CD8-positive, alpha-beta T cell (primary cell): ENCODE measurements at regions of chr17 and their contacts with region 1.

Region 1: DNA sequence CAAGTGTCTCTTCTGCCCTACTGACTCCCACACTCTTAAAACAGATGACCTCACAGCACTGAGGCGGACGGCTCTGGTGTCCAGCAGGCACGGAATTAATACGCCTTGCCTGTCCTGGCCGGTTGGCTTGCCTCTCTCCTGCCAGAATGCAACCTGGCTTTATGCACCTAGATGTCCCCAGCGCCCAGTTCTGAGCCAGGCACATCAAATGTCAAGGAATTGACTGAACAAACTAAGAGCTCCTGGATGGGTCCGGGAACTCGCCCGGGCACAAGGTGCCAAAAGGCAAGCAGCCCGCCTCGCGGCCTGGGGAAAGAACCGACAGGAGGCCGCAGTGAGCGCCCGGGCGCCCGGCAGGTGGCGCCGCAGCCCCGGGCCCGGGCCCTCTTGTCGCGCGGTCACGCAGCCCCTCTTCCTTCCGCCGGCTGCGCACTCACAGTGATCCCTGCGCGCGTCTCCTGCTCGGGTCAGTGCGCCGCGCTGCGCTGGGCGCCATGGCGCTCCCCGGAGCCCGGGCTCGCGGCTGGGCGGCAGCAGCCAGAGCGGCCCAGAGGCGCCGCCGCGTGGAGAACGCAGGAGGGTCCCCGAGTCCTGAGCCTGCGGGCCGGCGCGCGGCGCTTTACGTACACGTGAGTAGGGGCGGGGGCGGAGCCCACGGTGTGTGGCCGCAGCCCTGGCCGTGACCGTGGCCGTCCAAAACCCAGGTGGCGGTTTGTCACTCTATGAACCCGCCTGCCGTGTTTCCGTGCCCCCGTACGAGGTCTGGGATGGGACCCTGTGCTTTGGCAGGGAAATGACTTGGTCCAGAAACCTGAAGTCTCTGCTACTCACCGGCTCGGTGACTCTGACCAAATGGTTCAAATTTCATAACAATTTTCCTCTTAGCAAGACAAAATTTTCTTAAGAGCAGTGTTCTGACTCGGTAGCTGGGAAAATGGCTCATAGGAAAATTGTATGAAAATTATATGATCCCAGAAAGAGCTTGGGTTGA is at the start of gene RSAD1:
- DNase-seq: peak; percentile 68 to 94 (median 83)
- ATAC-seq: peak; percentile 90
- H3K4me3 ChIP-seq: peak within 1 kb of the TSS; percentile 71 to 88
- H3K4me3 Mint-ChIP-seq: peak within 1 kb of the TSS; percentile 90
- H3K27ac ChIP-seq: peak within 1 kb of the TSS; percentile 56 to 85
- H3K27ac Mint-ChIP-seq: peak within 1 kb of the TSS; percentile 90
- H3K4me1 ChIP-seq: peaks cover 20% of the 10 kb centered on the region
- H3K4me1 Mint-ChIP-seq: peaks cover 22% of the 10 kb centered on the region
- H3K27me3 ChIP-seq: no peaks in the 10 kb centered on the region
- H3K27me3 Mint-ChIP-seq: peaks cover 3% of the 10 kb centered on the region
- CTCF ChIP-seq: peak; percentile 80
- total RNA-seq, gene RSAD1: 46.4 to 46.9 TPM

Region 2: GRCh38 chr17:50037321-50038071 is 441.2 kb before region 1 on chr17:
- CTCF ChIA-PET with region 1: no interaction called
- POLR2A ChIA-PET with region 1: no interaction called
- intact Hi-C with region 1: no loop called
- DNase-seq: no peak
- ATAC-seq: no peak
- H3K4me3 ChIP-seq: no peak overlapping the region
- H3K4me3 Mint-ChIP-seq: no peak overlapping the region
- H3K27ac ChIP-seq: no peak overlapping the region
- H3K27ac Mint-ChIP-seq: no peak overlapping the region
- H3K4me1 ChIP-seq: no peaks in the 10 kb centered on the region
- H3K4me1 Mint-ChIP-seq: no peaks in the 10 kb centered on the region
- H3K27me3 ChIP-seq: no peaks in the 10 kb centered on the region
- H3K27me3 Mint-ChIP-seq: peaks cover 9% of the 10 kb centered on the region
- CTCF ChIP-seq: no peak

Region 3: DNA sequence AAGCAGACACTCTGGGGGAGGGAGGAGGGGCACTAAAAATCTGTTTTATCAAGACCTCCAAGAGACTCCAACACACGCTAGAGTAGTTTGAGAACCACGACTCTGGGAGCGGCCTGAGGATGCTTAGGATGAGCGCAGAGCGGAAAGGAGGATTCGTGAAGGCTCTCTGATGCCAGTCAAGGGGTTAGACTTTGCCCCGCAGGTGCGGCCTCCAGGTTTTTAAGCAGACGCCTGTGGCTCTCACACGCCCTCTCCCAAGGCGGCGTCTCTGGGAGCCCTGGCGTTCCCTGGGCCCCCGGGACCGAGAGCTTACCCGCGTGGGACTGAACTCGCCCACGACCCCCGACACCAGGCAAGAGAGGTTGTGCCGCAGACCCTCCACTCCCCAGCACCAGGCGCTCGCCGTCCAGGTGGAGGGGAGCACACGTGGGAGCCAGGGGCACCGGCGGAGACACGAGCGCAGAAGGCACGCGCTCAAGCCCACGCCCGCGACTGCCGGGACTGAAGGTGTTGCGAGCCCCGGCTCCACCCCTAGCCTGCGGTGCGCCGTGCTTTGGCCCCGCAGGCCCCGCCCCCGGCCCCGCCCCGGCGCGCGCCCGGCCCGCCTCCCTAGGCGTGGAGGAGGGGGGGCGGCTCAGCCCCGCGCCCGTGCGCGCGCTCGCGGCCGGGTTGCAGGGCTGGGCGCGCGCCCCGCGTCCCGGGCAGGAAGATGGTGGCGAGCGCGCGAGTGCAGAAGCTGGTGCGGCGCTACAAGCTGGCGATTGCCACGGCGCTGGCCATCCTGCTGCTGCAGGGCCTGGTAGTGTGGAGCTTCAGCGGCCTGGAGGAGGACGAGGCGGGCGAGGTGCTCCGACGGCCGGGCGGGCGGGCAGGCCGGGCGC is 133.0 kb before region 1 on chr17 and contains the start of gene XYLT2:
- CTCF ChIA-PET with region 1: no interaction called
- POLR2A ChIA-PET with region 1: no interaction called
- intact Hi-C with region 1: loop called in 1 of 2 experiments (anchors 1 kb)
- DNase-seq: peak; percentile 83 to 96 (median 93)
- ATAC-seq: peak; percentile 94
- H3K4me3 ChIP-seq: peak within 1 kb of the TSS; percentile 78 to 90
- H3K4me3 Mint-ChIP-seq: peak within 1 kb of the TSS; percentile 93
- H3K27ac ChIP-seq: peak within 1 kb of the TSS; percentile 56 to 77
- H3K27ac Mint-ChIP-seq: peak within 1 kb of the TSS; percentile 91
- H3K4me1 ChIP-seq: peaks cover 29% of the 10 kb centered on the region
- H3K4me1 Mint-ChIP-seq: peaks cover 37% of the 10 kb centered on the region
- H3K27me3 ChIP-seq: no peaks in the 10 kb centered on the region
- H3K27me3 Mint-ChIP-seq: no peaks in the 10 kb centered on the region
- CTCF ChIP-seq: no peak
- total RNA-seq, gene XYLT2: 9.0 to 9.4 TPM

Region 4: GRCh38 chr17:50397111-50397918 is 81.4 kb before region 1 on chr17 and contains the start of gene LRRC59:
- CTCF ChIA-PET with region 1: interaction called, 12 read pairs
- POLR2A ChIA-PET with region 1: interaction called, 6 read pairs
- intact Hi-C with region 1: loop called (anchors 1 kb)
- DNase-seq: peak; percentile 90 to 97 (median 94)
- ATAC-seq: peak; percentile 100
- H3K4me3 ChIP-seq: peak within 1 kb of the TSS; percentile 78 to 94
- H3K4me3 Mint-ChIP-seq: peak within 1 kb of the TSS; percentile 89
- H3K27ac ChIP-seq: peak within 1 kb of the TSS; percentile 85 to 87
- H3K27ac Mint-ChIP-seq: peak within 1 kb of the TSS; percentile 91
- H3K4me1 ChIP-seq: peaks cover 22% of the 10 kb centered on the region
- H3K4me1 Mint-ChIP-seq: peaks cover 40% of the 10 kb centered on the region
- H3K27me3 ChIP-seq: no peaks in the 10 kb centered on the region
- H3K27me3 Mint-ChIP-seq: no peaks in the 10 kb centered on the region
- CTCF ChIP-seq: peak; percentile 90
- total RNA-seq, gene LRRC59: 59.1 to 59.9 TPM

Region 5: GRCh38 chr17:50507871-50508572 is 29.3 kb after region 1 on chr17 and contains the start of gene MYCBPAP:
- CTCF ChIA-PET with region 1: interaction called, 8 read pairs
- POLR2A ChIA-PET with region 1: interaction called, 3 read pairs
- intact Hi-C with region 1: loop called (anchors 1 kb)
- DNase-seq: peak; percentile 68 to 91 (median 76)
- ATAC-seq: peak; percentile 73
- H3K4me3 ChIP-seq: peak within 1 kb of the TSS; percentile 68 to 77
- H3K4me3 Mint-ChIP-seq: peak within 1 kb of the TSS; percentile 95
- H3K27ac ChIP-seq: peak within 1 kb of the TSS; percentile 50 to 56
- H3K27ac Mint-ChIP-seq: peak within 1 kb of the TSS; percentile 94
- H3K4me1 ChIP-seq: peaks cover 22% of the 10 kb centered on the region
- H3K4me1 Mint-ChIP-seq: peaks cover 43% of the 10 kb centered on the region
- H3K27me3 ChIP-seq: no peaks in the 10 kb centered on the region
- H3K27me3 Mint-ChIP-seq: no peaks in the 10 kb centered on the region
- CTCF ChIP-seq: no peak
- total RNA-seq, gene MYCBPAP: 3.4 to 3.5 TPM

Region 6: DNA sequence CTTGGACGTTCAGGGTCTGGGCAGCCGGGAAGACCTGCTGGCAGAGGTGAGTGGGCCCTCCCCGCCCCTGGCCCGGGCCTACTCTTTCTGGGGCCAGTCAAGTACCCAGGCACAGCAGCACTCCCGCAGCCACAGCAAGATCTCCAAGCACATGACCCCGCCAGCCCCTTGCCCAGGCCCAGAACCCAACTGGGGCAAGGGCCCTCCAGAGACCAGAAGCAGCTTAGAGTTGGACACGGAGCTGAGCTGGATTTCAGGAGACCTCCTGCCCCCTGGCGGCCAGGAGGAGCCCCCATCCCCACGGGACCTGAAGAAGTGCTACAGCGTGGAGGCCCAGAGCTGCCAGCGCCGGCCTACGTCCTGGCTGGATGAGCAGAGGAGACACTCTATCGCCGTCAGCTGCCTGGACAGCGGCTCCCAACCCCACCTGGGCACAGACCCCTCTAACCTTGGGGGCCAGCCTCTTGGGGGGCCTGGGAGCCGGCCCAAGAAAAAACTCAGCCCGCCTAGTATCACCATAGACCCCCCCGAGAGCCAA is 147.4 kb after region 1 on chr17:
- CTCF ChIA-PET with region 1: interaction called, 11 read pairs
- POLR2A ChIA-PET with region 1: no interaction called
- intact Hi-C with region 1: loop called in 1 of 2 experiments (anchors 1 kb)
- DNase-seq: peak; percentile 30 to 75 (median 63)
- ATAC-seq: peak; percentile 67
- H3K4me3 ChIP-seq: no peak overlapping the region
- H3K4me3 Mint-ChIP-seq: no peak overlapping the region
- H3K27ac ChIP-seq: no peak overlapping the region
- H3K27ac Mint-ChIP-seq: no peak overlapping the region
- H3K4me1 ChIP-seq: no peaks in the 10 kb centered on the region
- H3K4me1 Mint-ChIP-seq: no peaks in the 10 kb centered on the region
- H3K27me3 ChIP-seq: peaks cover 5 to 13% of the 10 kb centered on the region in 2 experiments
- H3K27me3 Mint-ChIP-seq: peaks cover 42% of the 10 kb centered on the region
- CTCF ChIP-seq: peak; percentile 59

Region 7: GRCh38 chr17:50949989-50950881 is 471.5 kb after region 1 on chr17:
- CTCF ChIA-PET with region 1: no interaction called
- POLR2A ChIA-PET with region 1: no interaction called
- intact Hi-C with region 1: loop called in 1 of 2 experiments (anchors 10 kb)
- DNase-seq: peak; percentile 32 to 80 (median 60)
- ATAC-seq: peak; percentile 87
- H3K4me3 ChIP-seq: no peak overlapping the region
- H3K4me3 Mint-ChIP-seq: no peak overlapping the region
- H3K27ac ChIP-seq: no peak overlapping the region
- H3K27ac Mint-ChIP-seq: no peak overlapping the region
- H3K4me1 ChIP-seq: peaks cover 12% of the 10 kb centered on the region
- H3K4me1 Mint-ChIP-seq: peaks cover 22% of the 10 kb centered on the region
- H3K27me3 ChIP-seq: no peaks in the 10 kb centered on the region
- H3K27me3 Mint-ChIP-seq: no peaks in the 10 kb centered on the region
- CTCF ChIP-seq: peak; percentile 49